GM12878 (cell line): ENCODE measurements at regions of chr3 and their contacts with region 1.

Region 1: DNA sequence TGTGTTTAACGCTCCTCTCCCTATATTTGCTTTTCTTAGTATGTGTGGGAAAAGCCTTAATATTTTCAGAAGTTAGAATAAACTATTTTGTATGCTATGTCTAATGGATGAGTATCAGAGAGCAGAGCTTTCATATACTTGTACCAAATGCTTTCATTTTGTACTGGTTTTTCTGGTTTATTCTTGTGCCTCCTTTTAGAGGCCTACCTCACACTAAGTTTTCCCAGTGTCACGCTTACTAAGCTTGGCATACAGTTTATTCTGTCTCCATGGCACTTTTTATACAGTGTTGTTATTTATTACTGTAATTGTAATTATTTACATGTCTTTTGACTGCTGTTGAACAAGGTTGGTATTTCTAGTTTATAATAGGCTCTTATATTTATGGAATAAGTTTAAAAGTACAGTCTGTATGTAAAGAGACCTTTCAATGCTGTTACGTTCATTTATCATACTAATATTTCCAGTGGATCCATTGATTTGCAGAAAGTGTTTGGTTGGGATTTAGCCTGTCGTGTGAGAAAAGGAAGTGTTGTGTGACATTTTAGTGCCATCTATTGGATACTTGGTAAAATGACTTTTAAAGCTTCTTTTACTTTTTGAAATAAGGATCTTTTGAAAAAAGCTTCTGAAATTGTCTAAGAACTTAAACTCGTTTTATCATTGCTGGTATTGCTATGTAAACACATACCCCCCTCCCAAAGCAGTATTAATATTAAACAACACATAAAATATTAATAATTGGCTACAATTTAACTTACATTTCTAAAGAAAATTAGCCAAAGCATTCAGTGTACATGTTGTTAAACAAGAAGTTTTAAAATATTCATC is 5.2 kb upstream of the EBLN2 start:
- DNase-seq: no peak
- ATAC-seq: peak; percentile 49
- H3K4me3 ChIP-seq: no peak overlapping the region
- H3K27ac ChIP-seq: no peak overlapping the region
- H3K4me1 ChIP-seq: no peaks in the 10 kb centered on the region
- H3K27me3 ChIP-seq: no peaks in the 10 kb centered on the region
- CTCF ChIP-seq: peak; percentile 34 to 57 (median 35); a peak in 3 of 6 replicates
- EP300 ChIP-seq: no peak
- POLR2A ChIP-seq: no peak
- RAD21 ChIP-seq: peak; percentile 75

Region 2: GRCh38 chr3:72847751-72848702 is 208.2 kb before region 1 on chr3 and contains the start of gene SHQ1:
- CTCF ChIA-PET with region 1: interaction called, 38 read pairs
- POLR2A ChIA-PET with region 1: no interaction called
- RAD21 ChIA-PET with region 1: interaction called, 21 read pairs
- SMC1A ChIA-PET with region 1: interaction called, 36 read pairs
- in situ Hi-C with region 1: loop called (anchors 10 kb)
- intact Hi-C with region 1: loop called (anchors 2 kb)
- DNase-seq: peak; percentile 81
- ATAC-seq: peak; percentile 88
- H3K4me3 ChIP-seq: peak within 1 kb of the TSS; percentile 97
- H3K27ac ChIP-seq: peak within 1 kb of the TSS; percentile 79
- H3K4me1 ChIP-seq: peaks cover 35% of the 10 kb centered on the region
- H3K27me3 ChIP-seq: no peaks in the 10 kb centered on the region
- CTCF ChIP-seq: no peak
- EP300 ChIP-seq: no peak
- POLR2A ChIP-seq: peak; percentile 88
- RAD21 ChIP-seq: no peak
- polyA plus RNA-seq, gene SHQ1: 12.6 to 12.8 TPM

Region 3: GRCh38 chr3:72944696-72945095 is 111.5 kb before region 1 on chr3:
- CTCF ChIA-PET with region 1: interaction called, 110 read pairs
- POLR2A ChIA-PET with region 1: no interaction called
- RAD21 ChIA-PET with region 1: interaction called, 51 read pairs
- SMC1A ChIA-PET with region 1: interaction called, 67 read pairs
- in situ Hi-C with region 1: loop called (anchors 5 kb)
- intact Hi-C with region 1: loop called (anchors 1 kb)
- DNase-seq: no peak
- ATAC-seq: no peak
- H3K4me3 ChIP-seq: no peak overlapping the region
- H3K27ac ChIP-seq: no peak overlapping the region
- H3K4me1 ChIP-seq: no peaks in the 10 kb centered on the region
- H3K27me3 ChIP-seq: no peaks in the 10 kb centered on the region
- CTCF ChIP-seq: no peak
- EP300 ChIP-seq: no peak
- POLR2A ChIP-seq: no peak
- RAD21 ChIP-seq: no peak

Region 4: GRCh38 chr3:72982609-72983366 is 73.4 kb before region 1 on chr3:
- CTCF ChIA-PET with region 1: interaction called, 15 read pairs
- POLR2A ChIA-PET with region 1: no interaction called
- RAD21 ChIA-PET with region 1: no interaction called
- SMC1A ChIA-PET with region 1: interaction called, 8 read pairs
- in situ Hi-C with region 1: no loop called
- intact Hi-C with region 1: no loop called
- DNase-seq: no peak
- ATAC-seq: peak; percentile 49; the same call in 2 of the 3 replicates
- H3K4me3 ChIP-seq: no peak overlapping the region
- H3K27ac ChIP-seq: no peak overlapping the region
- H3K4me1 ChIP-seq: no peaks in the 10 kb centered on the region
- H3K27me3 ChIP-seq: no peaks in the 10 kb centered on the region
- CTCF ChIP-seq: no peak
- EP300 ChIP-seq: no peak
- POLR2A ChIP-seq: no peak
- RAD21 ChIP-seq: no peak

Region 5: GRCh38 chr3:73037369-73037699 is 18.9 kb before region 1 on chr3:
- CTCF ChIA-PET with region 1: interaction called, 24 read pairs
- POLR2A ChIA-PET with region 1: no interaction called
- RAD21 ChIA-PET with region 1: no interaction called
- SMC1A ChIA-PET with region 1: interaction called, 6 read pairs
- in situ Hi-C with region 1: no loop called
- intact Hi-C with region 1: no loop called
- DNase-seq: no peak
- ATAC-seq: peak; percentile 48
- H3K4me3 ChIP-seq: no peak overlapping the region
- H3K27ac ChIP-seq: 0 out of 2 replicates have a peak overlapping the region, but pooled peaks have one; percentile 39
- H3K4me1 ChIP-seq: peaks cover 20% of the 10 kb centered on the region
- H3K27me3 ChIP-seq: no peaks in the 10 kb centered on the region
- CTCF ChIP-seq: no peak
- EP300 ChIP-seq: no peak
- POLR2A ChIP-seq: no peak
- RAD21 ChIP-seq: no peak

Region 6: GRCh38 chr3:73086071-73086494 is 29.9 kb after region 1 on chr3:
- CTCF ChIA-PET with region 1: interaction called, 22 read pairs
- POLR2A ChIA-PET with region 1: no interaction called
- RAD21 ChIA-PET with region 1: interaction called, 4 read pairs
- SMC1A ChIA-PET with region 1: interaction called, 15 read pairs
- in situ Hi-C with region 1: no loop called
- intact Hi-C with region 1: no loop called
- DNase-seq: no peak
- ATAC-seq: peak; percentile 76
- H3K4me3 ChIP-seq: no peak overlapping the region
- H3K27ac ChIP-seq: no peak overlapping the region
- H3K4me1 ChIP-seq: no peaks in the 10 kb centered on the region
- H3K27me3 ChIP-seq: no peaks in the 10 kb centered on the region
- CTCF ChIP-seq: peak; percentile 67 to 89 (median 72)
- EP300 ChIP-seq: no peak
- POLR2A ChIP-seq: no peak
- RAD21 ChIP-seq: peak; percentile 98

Region 7: DNA sequence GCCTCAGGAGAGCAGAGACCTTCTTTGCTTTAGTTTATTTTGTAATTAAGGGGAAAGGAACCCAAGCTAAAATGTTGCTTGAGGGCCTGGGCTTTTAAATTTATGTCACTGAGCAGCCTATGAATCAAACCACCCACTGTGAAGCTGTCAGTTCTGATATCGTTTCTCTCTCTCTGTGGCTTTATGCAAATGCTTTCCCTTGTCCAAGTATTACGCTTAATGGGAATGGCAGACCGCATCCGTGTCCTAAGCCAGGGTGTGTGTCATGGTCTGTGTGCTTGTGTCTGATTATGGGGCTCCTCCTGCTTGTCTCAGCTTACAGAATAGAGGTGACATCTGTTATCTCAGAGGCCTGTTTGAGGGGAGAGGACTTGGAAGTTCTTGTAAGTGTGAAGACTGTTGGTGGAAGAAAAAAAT is 87.6 kb after region 1 on chr3:
- CTCF ChIA-PET with region 1: no interaction called
- POLR2A ChIA-PET with region 1: no interaction called
- RAD21 ChIA-PET with region 1: no interaction called
- SMC1A ChIA-PET with region 1: no interaction called
- in situ Hi-C with region 1: no loop called
- intact Hi-C with region 1: no loop called
- DNase-seq: no peak
- ATAC-seq: no peak
- H3K4me3 ChIP-seq: no peak overlapping the region
- H3K27ac ChIP-seq: no peak overlapping the region
- H3K4me1 ChIP-seq: no peaks in the 10 kb centered on the region
- H3K27me3 ChIP-seq: no peaks in the 10 kb centered on the region; a peak in 1 of 4 replicates
- CTCF ChIP-seq: no peak
- EP300 ChIP-seq: no peak
- POLR2A ChIP-seq: no peak
- RAD21 ChIP-seq: no peak